Naive thymus-derived CD4-positive, alpha-beta T cell (primary cell): ENCODE measurements at regions of chr14 and their contacts with region 1.

Region 1: DNA sequence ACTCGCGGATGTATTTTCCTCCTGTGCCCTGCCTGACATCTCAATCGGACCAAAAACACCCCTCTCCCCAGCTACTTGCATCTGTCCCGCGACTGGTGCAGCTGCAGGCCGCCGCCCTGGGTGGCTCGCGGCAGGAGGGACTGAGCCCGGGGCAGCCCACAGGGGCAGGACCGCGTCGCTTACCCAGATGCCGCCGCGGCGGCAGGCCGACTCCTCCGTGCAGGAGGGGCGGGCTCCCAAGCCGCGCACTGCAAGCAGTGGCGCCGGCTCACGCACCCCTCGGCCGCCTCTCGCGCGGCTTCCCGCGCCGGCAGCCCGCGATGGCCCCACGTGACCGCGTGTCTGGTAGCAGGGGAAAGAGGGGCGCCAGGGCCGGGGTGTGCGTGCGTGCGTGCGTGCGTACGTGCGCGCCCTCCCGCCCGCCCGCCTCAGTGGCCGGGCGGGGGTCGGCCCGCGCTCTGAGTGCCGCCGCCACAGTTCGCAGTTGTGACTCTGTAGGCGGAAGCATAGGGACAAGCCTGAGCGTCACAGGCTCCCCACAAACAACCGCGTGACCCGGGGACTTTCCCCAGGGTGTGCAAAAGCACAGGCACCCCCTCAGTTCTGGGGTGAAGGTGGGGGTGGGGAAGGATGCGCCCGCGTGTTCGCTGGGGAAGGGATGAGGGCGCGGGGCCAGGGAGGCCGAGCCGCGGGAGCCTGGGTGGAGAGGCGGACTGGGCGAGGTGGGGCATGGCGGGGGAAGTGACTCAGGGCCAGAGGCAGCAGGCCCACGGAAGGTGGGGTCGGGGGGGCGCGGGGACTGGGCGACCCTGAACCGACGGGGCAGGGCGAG is at the start of gene ZBTB25:
- DNase-seq: peak; percentile 88 to 100 (median 98)
- ATAC-seq: peak; percentile 81
- H3K4me3 ChIP-seq: peak within 1 kb of the TSS; percentile 88
- H3K4me3 Mint-ChIP-seq: peak within 1 kb of the TSS; percentile 88 to 100 (median 98)
- H3K27ac ChIP-seq: peak within 1 kb of the TSS; percentile 99
- H3K27ac Mint-ChIP-seq: peak within 1 kb of the TSS; percentile 96 to 100 (median 100)
- H3K4me1 ChIP-seq: peaks cover 41 to 49% of the 10 kb centered on the region in 2 donors
- H3K4me1 Mint-ChIP-seq: peaks cover 44 to 70% (median 55%) of the 10 kb centered on the region in 7 donors
- H3K27me3 ChIP-seq: no peaks in the 10 kb centered on the region
- H3K27me3 Mint-ChIP-seq: peaks cover 0 to 3% (median 0%) of the 10 kb centered on the region in 5 donors
- total RNA-seq, gene ZBTB25: 37.6 to 88.0 (median 60.6) TPM

Region 2: DNA sequence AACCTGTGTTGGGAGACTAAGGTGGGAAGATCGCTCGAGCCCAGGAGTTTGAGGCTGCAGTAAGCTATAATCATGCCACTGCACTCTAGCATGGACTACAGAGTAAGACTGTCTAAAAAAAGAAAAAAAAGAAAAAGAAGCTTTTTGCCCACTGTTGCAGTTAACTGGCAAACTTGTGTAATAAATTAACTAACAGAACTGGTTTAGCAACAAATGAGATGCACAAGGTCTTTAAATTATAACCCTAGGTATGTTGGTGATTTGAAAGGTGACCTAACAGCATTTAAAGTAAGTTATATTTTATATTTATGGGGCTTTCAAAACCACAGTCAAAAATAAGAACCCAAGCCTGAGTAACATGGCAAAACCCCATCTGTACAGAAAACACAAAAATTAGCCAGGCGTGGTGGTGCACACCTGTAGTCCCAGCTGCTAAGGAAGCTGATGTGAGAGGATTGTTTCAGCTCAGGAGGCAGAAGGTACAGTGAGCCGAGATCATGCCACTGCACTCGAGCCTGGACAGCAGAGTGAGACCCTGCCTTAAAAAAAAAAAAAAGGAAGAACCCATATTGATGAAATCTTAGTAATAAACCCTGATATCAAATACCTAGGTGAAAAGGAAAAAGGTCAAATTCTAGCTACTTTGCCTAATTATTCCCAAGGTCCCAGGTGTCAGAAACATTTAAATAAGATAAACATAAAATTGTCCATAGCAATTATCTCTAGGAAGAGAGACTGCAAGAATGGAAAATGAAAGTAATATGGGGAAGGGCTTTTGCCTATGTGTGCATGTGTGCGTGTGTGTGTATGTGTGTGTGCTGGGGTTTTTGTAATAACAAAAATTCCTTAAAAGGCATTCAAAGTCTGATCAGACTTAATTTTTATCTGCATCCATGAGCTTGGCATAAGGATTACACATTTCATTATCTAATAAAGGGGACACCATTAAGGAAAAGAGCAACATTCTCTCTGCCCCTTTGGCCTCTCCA is 635.5 kb before region 1 on chr14:
- CTCF ChIA-PET with region 1: no interaction called
- POLR2A ChIA-PET with region 1: interaction called, 3 read pairs
- intact Hi-C with region 1: loop called (anchors 1 to 2 kb)
- DNase-seq: peak in 6 of 9 donors; percentile 15 to 44 (median 28)
- ATAC-seq: no peak
- H3K4me3 ChIP-seq: no peak overlapping the region
- H3K4me3 Mint-ChIP-seq: peak overlapping the region; percentile 46 to 84 (median 75)
- H3K27ac ChIP-seq: peak overlapping the region; percentile 36
- H3K27ac Mint-ChIP-seq: peak overlapping the region; percentile 84 to 98 (median 92)
- H3K4me1 ChIP-seq: peaks cover 36 to 60% of the 10 kb centered on the region in 2 donors
- H3K4me1 Mint-ChIP-seq: peaks cover 37 to 78% (median 64%) of the 10 kb centered on the region in 7 donors
- H3K27me3 ChIP-seq: no peaks in the 10 kb centered on the region
- H3K27me3 Mint-ChIP-seq: no peaks in the 10 kb centered on the region

Region 3: DNA sequence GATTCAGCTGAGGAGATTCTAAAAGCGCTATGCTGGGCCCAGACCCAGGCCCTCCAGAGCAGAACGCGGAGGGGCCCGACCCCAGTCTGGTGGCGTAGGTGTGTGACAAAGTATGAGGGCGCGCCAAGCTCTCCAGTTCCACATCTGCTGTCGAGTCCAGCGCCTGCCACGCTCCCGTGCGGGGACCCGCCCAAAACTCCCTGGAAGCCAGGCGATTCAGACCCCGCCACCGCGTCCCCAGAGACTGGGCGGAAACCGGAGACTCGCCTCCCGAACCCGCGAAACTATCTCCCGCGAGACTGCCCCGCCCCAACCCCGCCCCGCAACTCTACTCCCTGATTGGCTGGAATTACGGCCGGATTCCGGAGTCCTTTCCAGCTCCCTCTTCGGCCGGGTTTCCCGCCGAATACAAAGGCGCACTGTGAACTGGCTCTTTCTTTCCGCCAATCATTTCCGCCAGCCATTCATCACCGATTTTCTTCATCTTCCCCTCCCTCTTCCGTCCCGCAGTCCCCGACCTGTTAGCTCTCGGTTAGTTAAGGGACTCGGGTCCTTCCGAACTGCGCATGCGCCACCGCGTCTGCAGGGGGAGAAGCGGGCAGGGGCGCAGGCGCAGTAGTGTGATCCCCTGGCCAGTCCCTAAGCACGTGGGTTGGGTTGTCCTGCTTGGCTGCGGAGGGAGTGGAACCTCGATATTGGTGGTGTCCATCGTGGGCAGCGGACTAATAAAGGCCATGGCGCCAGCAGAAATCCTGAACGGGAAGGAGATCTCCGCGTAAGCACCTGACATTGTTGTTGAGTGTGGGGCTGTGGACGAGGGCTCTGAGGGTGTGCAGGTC is 115.8 kb before region 1 on chr14 and contains the start of gene MTHFD1:
- CTCF ChIA-PET with region 1: no interaction called
- POLR2A ChIA-PET with region 1: interaction called, 10 read pairs
- intact Hi-C with region 1: loop called (anchors 1 kb)
- DNase-seq: peak; percentile 93 to 97 (median 96)
- ATAC-seq: peak; percentile 90
- H3K4me3 ChIP-seq: peak within 1 kb of the TSS; percentile 89
- H3K4me3 Mint-ChIP-seq: peak within 1 kb of the TSS; percentile 92 to 99 (median 96)
- H3K27ac ChIP-seq: peak within 1 kb of the TSS; percentile 79
- H3K27ac Mint-ChIP-seq: peak within 1 kb of the TSS; percentile 90 to 99 (median 95)
- H3K4me1 ChIP-seq: peaks cover 11 to 17% of the 10 kb centered on the region in 2 donors
- H3K4me1 Mint-ChIP-seq: peaks cover 18 to 49% (median 41%) of the 10 kb centered on the region in 7 donors
- H3K27me3 ChIP-seq: no peaks in the 10 kb centered on the region
- H3K27me3 Mint-ChIP-seq: peaks cover 0 to 4% (median 0%) of the 10 kb centered on the region in 5 donors
- total RNA-seq, gene MTHFD1: 28.0 to 189 (median 30.2) TPM

Region 4: GRCh38 chr14:64465191-64465822 is 38.4 kb before region 1 on chr14 and contains the start of gene AKAP5:
- CTCF ChIA-PET with region 1: no interaction called
- POLR2A ChIA-PET with region 1: interaction called, 17 read pairs
- intact Hi-C with region 1: loop called (anchors 1 to 5 kb)
- DNase-seq: peak; percentile 49 to 71 (median 60)
- ATAC-seq: peak; percentile 92
- H3K4me3 ChIP-seq: peak within 1 kb of the TSS; percentile 66
- H3K4me3 Mint-ChIP-seq: peak within 1 kb of the TSS; percentile 83 to 94 (median 90)
- H3K27ac ChIP-seq: peak within 1 kb of the TSS; percentile 55
- H3K27ac Mint-ChIP-seq: peak within 1 kb of the TSS; percentile 25 to 92 (median 70)
- H3K4me1 ChIP-seq: peaks cover 12 to 16% of the 10 kb centered on the region in 2 donors
- H3K4me1 Mint-ChIP-seq: peaks cover 23 to 50% (median 41%) of the 10 kb centered on the region in 7 donors
- H3K27me3 ChIP-seq: no peaks in the 10 kb centered on the region
- H3K27me3 Mint-ChIP-seq: peaks cover 0 to 3% (median 0%) of the 10 kb centered on the region in 5 donors
- total RNA-seq, gene AKAP5: 0.11 to 1.7 (median 0.13) TPM

Region 5: DNA sequence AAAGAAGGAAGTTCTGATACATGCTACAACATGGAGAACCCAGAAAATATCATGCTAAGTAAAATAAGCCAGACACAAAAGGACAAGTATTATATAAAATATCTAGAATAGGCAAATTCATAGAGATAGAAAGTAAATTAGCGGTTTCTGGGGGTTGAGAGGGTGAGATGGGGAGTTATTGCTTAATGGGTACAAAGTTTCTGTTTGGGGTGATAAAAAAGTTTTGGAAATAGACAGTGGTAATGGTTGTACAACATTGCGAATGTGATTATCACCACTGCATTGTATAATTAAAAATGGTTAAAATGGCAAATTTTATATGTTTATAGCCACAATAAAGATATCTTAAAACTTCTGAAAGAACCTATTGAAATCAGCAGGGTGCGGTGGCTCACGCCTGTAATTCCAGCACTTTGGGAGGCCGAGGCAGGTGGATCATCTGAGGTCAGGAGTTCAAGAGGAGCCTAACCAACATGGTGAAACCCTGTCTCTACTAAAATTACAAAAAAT is 15.0 kb before region 1 on chr14:
- CTCF ChIA-PET with region 1: interaction called, 12 read pairs
- POLR2A ChIA-PET with region 1: interaction called, 157 read pairs
- intact Hi-C with region 1: loop called in 1 of 2 experiments (anchors 1 kb)
- DNase-seq: no peak
- ATAC-seq: no peak
- H3K4me3 ChIP-seq: no peak overlapping the region
- H3K4me3 Mint-ChIP-seq: no peak overlapping the region
- H3K27ac ChIP-seq: no peak overlapping the region
- H3K27ac Mint-ChIP-seq: peak overlapping the region in 3 of 9 donors; percentile 6 to 81 (median 21)
- H3K4me1 ChIP-seq: peaks cover 0 to 13% of the 10 kb centered on the region in 2 donors
- H3K4me1 Mint-ChIP-seq: peaks cover 22 to 57% (median 42%) of the 10 kb centered on the region in 7 donors
- H3K27me3 ChIP-seq: no peaks in the 10 kb centered on the region
- H3K27me3 Mint-ChIP-seq: no peaks in the 10 kb centered on the region

Region 6: DNA sequence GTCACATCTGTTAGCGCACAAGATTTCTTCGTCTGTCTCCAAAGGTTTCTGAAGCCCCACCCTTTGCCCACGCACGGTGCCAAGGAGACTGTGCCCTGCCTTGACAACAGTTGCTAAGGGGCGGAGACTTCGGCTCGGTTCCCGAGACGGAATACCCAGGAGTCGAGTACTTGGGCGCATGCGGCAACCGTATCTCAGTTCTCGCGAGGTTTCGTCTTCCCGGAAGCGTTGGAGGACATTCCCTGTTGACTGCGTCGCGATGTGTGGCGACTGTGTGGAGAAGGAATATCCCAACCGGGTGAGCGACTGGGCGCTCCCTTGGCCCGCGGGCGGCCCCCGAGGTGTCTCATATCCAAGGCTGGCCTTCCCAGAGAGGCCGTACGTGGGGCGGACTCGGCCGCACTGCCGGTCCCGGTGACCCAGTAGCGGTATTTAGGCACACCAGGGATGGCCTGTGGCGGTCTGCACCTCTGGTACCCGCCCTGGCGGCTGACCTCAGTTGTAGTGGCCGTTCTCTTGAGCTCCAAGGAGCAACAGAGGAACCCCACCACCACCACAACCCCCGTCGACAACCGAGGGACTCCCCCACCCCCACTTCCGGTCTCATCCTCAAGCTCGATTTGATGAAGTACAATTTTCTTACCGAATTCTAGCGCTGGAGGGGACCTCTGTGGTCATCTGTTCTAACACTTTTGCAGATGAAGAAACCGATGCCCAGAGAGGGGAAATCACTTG is 410.7 kb after region 1 on chr14 and contains the start of gene CHURC1:
- CTCF ChIA-PET with region 1: no interaction called
- POLR2A ChIA-PET with region 1: no interaction called
- intact Hi-C with region 1: loop called (anchors 1 kb)
- DNase-seq: peak; percentile 83 to 99 (median 94)
- ATAC-seq: peak; percentile 98
- H3K4me3 ChIP-seq: peak within 1 kb of the TSS; percentile 96
- H3K4me3 Mint-ChIP-seq: peak within 1 kb of the TSS; percentile 87 to 97 (median 92)
- H3K27ac ChIP-seq: peak within 1 kb of the TSS; percentile 99
- H3K27ac Mint-ChIP-seq: peak within 1 kb of the TSS; percentile 93 to 99 (median 97)
- H3K4me1 ChIP-seq: peaks cover 33 to 37% of the 10 kb centered on the region in 2 donors
- H3K4me1 Mint-ChIP-seq: peaks cover 42 to 60% (median 51%) of the 10 kb centered on the region in 7 donors
- H3K27me3 ChIP-seq: no peaks in the 10 kb centered on the region
- H3K27me3 Mint-ChIP-seq: peaks cover 0 to 13% (median 0%) of the 10 kb centered on the region in 5 donors
- total RNA-seq, gene CHURC1: 71.9 to 117 (median 80.7) TPM